Ovary (tissue), 10 donors: ENCODE measurements at regions of chr11 and their contacts with region 1.

Region 1: DNA sequence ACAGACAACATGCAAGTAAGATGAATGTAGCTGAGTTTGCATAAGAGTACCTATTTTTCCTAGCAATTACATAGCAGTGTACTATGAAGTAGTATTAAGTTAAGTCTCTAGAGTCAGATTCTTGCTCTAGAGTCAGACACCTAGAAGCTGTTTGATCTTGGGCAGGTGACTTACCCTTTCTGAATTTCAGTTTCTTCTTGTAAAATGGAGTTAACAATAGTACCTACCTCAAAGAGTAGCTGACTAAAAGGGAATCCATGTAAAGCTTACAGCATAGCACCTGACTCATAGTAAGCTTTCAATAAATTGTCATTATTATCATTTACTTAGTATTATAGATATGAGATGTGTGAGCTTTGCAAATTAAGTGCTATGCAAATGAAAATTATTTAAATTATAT is 47.8 kb upstream of the PTPRJ start:
- DNase-seq: no peak
- H3K4me3 ChIP-seq: no peak overlapping the region
- H3K27ac ChIP-seq: no peak overlapping the region
- H3K4me1 ChIP-seq: no peaks in the 10 kb centered on the region
- H3K27me3 ChIP-seq: no peaks in the 10 kb centered on the region
- CTCF ChIP-seq: no peak
- EP300 ChIP-seq: no peak
- POLR2A ChIP-seq: no peak

Region 2: DNA sequence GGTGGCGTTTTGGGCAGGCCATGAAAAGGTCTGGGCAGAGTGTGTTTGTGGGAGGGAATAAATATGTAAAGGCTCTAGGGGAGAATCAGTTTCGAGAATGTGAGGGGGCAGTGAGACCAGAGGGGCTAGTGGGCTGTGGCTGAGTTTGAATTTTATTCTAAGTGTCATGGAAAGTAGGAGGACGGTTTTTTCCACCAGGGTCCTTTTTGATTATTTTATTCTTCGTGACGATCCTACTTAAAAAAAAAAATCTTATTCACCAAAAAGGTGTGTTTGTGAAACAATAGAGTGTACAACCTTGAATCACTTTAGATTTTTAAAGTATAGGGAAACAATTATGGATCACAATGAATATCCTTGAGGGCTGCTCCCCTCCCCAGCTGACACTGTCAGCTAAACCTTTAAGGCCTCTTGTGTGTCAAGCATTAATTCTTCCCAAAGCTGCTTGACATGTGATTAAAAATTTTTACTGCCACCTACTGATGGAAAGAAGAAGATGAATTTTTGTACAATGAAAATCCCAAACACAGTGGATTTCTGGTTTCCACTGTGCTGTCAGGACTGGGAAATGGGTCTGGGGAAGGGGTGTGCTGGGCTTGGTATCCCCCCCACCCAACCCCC is 176.6 kb after region 1 on chr11:
- intact Hi-C with region 1: loop called in 3 of 4 experiments (anchors 2 kb)
- DNase-seq: no peak
- H3K4me3 ChIP-seq: no peak overlapping the region
- H3K27ac ChIP-seq: no peak overlapping the region
- H3K4me1 ChIP-seq: no peaks in the 10 kb centered on the region
- H3K27me3 ChIP-seq: no peaks in the 10 kb centered on the region
- CTCF ChIP-seq: peak in 1 of 3 donors; percentile 34
- EP300 ChIP-seq: no peak
- POLR2A ChIP-seq: no peak